Activated CD4-positive, alpha-beta T cell treated with anti-CD3 and anti-CD28 coated beads, Interleukin-2, amount 10 ng/mL, durations not matched to agents 24 days and 14 days (primary cell): ENCODE measurements at regions of chr6 and their contacts with region 1.

Region 1: GRCh38 chr6:35146453-35146852 is 5.3 kb upstream of the TCP11 start:
- DNase-seq: peak; percentile 72
- H3K4me3 Mint-ChIP-seq: no peak overlapping the region
- H3K27ac Mint-ChIP-seq: no peak overlapping the region
- H3K4me1 Mint-ChIP-seq: peaks cover 33% of the 10 kb centered on the region
- H3K27me3 Mint-ChIP-seq: peaks cover 6% of the 10 kb centered on the region

Region 2: GRCh38 chr6:35165630-35166071 is 19.2 kb after region 1 on chr6:
- intact Hi-C with region 1: loop called (anchors 2 kb)
- DNase-seq: no peak
- H3K4me3 Mint-ChIP-seq: no peak overlapping the region
- H3K27ac Mint-ChIP-seq: peak overlapping the region; percentile 70
- H3K4me1 Mint-ChIP-seq: peaks cover 8% of the 10 kb centered on the region
- H3K27me3 Mint-ChIP-seq: peaks cover 17% of the 10 kb centered on the region

Region 3: DNA sequence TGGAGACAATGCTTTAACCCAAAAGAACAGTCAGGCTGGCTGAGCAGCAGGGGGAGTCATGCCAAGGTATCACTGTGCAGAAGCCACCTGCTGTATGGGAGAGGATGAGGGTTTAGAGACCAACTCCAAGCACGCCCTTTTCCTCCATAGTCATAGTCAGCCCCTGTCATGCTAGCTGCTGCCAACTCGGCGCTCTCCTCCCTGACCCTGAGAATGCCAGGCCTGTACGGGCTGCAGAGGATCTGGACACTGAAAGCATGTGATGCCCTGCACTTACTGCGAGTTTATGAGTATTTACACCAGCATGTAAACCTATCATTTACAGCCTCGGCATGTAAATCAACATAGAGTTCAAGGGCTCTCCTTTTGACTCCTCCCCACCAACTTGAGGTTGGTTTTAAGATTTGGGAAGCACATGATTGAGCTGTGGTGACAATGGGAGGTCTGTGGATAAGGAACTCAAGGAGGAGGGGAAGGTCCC is 55.7 kb after region 1 on chr6:
- intact Hi-C with region 1: loop called (anchors 1 kb)
- DNase-seq: no peak
- H3K4me3 Mint-ChIP-seq: no peak overlapping the region
- H3K27ac Mint-ChIP-seq: no peak overlapping the region
- H3K4me1 Mint-ChIP-seq: no peaks in the 10 kb centered on the region
- H3K27me3 Mint-ChIP-seq: peaks cover 45% of the 10 kb centered on the region